ENCODE measurements at regions of chr20 and their contacts with region 1.

Region 1: DNA sequence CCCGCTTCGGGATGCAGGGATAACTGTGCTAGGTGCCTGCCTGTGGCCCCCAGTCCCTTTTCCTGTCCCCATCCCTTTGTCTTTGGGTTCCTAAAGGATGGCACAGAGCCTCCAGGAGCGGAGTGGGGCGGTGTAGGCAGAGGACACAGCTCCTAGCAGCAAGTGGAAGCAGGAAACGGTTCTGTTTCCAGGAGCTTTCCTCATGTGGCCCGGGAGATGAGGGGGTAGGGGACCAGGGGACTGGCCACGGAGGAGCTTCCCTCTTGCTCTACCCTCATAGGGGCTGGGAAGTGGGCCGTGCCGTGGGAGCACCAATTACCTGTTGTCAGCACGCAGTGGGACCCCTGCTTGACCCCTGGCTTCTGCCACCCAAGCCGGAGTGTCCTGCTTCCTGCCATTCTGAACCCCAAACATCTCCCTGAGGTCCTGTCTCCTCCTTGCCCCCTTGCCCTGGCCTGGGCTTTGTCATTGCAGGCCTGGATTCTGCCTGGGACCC is 76.9 kb downstream of the SRC start:
- DNase-seq: no peak
- H3K4me3 ChIP-seq: no peak overlapping the region
- H3K27ac ChIP-seq: no peak overlapping the region
- H3K4me1 ChIP-seq: peaks cover 0 to 36% (median 15%) of the 10 kb centered on the region in 4 experiments; a peak in 6 of 7 replicates
- H3K27me3 ChIP-seq: no peaks in the 10 kb centered on the region; a peak in 2 of 7 replicates
- CTCF ChIP-seq: no peak
- EP300 ChIP-seq: no peak
- POLR2A ChIP-seq: no peak
- RAD21 ChIP-seq: no peak

Region 2: GRCh38 chr20:37411408-37412219 is 11.2 kb before region 1 on chr20:
- CTCF ChIA-PET with region 1: interaction called, 4 read pairs
- POLR2A ChIA-PET with region 1: interaction called, 10 read pairs
- DNase-seq: no peak
- H3K4me3 ChIP-seq: peak overlapping the region in 1 of 4 experiments; percentile 32; a peak in 1 of 8 replicates
- H3K27ac ChIP-seq: no peak overlapping the region
- H3K4me1 ChIP-seq: peaks cover 11 to 54% (median 31%) of the 10 kb centered on the region in 4 experiments
- H3K27me3 ChIP-seq: peaks cover 0 to 22% (median 14%) of the 10 kb centered on the region in 4 experiments; a peak in 4 of 7 replicates
- CTCF ChIP-seq: no peak
- EP300 ChIP-seq: no peak
- POLR2A ChIP-seq: no peak
- RAD21 ChIP-seq: 0 out of 4 replicates have a peak, but pooled peaks of 1 of the 2 experiments have one; percentile 8

Measured in H1 (cell line).